ENCODE measurements at regions of chr3 and their contacts with region 1.

Region 1: DNA sequence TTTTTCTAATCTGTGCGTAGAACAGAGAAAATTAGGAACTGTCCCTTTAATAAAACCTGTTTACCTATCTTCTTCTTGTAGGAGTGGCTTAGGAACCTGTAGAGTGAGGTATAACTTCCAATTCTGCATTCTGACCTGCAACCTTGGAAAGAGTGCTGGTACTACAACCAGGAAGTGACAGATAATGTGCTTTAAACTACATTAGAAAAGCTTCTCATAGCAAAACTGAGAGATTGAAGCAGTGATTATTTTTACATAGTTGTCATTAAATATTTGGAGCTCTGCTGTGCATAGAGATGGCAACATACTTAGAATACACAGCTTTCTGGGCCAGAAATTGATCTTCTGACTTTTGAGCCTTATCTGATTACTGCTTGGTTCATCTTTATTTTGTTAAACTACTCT is 50.4 kb upstream of the ZDHHC23 start:
- DNase-seq: peak in 1 of 14 experiments; percentile 34
- ATAC-seq: peak; percentile 48
- H3K4me3 ChIP-seq: no peak overlapping the region
- H3K4me3 Mint-ChIP-seq: no peak overlapping the region
- H3K27ac ChIP-seq: no peak overlapping the region
- H3K27ac Mint-ChIP-seq: no peak overlapping the region
- H3K4me1 ChIP-seq: no peaks in the 10 kb centered on the region
- H3K4me1 Mint-ChIP-seq: peaks cover 7% of the 10 kb centered on the region
- H3K27me3 ChIP-seq: no peaks in the 10 kb centered on the region
- H3K27me3 Mint-ChIP-seq: no peaks in the 10 kb centered on the region
- CTCF ChIP-seq: no peak

Region 2: DNA sequence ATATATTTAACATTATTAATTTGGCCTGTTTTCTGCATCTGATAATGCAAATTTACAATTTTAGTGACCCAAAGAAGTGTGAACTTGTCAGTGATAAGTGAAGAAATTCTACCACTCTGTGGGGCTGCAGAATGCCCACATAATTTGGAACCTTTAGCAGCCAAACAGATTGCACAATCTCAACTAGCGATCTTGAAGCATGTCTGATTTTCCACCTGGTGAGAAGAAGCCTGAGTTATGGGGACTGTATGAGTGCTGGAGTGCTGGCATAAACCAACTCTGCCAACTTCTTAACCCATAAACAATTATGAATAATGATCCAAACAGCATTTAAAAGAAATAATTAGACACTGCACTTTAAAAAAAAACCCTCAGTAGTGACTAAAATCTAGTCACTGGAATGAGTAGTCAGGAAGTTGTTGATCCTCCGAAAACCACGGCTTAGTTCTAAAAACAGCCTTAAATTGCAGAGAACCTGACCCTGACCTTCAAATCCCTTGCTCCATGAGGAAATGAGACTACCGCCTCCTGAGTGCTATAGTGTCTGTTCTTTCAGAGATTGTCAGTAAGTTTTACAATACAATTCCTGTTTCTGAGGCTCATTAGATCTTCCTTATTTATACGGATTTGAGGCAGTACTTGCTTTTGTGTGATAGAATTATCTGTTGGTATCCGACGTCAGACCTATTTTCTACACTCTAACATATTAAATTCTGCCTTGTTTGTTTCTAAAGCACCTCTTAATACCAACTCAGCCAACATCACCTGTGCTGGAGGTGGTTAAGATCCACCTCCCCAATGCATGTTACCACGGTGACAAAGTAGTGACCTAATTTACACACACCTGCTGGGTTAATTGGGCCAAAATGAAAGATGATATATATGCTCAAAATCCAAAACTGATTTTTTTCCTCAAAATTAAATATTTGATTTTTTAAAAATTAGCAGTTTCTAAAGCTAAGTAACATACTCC is 982.0 kb after region 1 on chr3:
- CTCF ChIA-PET with region 1: no interaction called
- POLR2A ChIA-PET with region 1: no interaction called
- intact Hi-C with region 1: loop called in 1 of 2 experiments (anchors 5 kb)
- DNase-seq: no peak
- ATAC-seq: no peak
- H3K4me3 ChIP-seq: no peak overlapping the region
- H3K4me3 Mint-ChIP-seq: no peak overlapping the region
- H3K27ac ChIP-seq: no peak overlapping the region
- H3K27ac Mint-ChIP-seq: no peak overlapping the region
- H3K4me1 ChIP-seq: no peaks in the 10 kb centered on the region
- H3K4me1 Mint-ChIP-seq: peaks cover 4% of the 10 kb centered on the region
- H3K27me3 ChIP-seq: no peaks in the 10 kb centered on the region
- H3K27me3 Mint-ChIP-seq: no peaks in the 10 kb centered on the region
- CTCF ChIP-seq: no peak

Measured in CD4-positive, alpha-beta T cell (primary cell).